ENCODE measurements at regions of chr12 and their contacts with region 1.

Region 1: DNA sequence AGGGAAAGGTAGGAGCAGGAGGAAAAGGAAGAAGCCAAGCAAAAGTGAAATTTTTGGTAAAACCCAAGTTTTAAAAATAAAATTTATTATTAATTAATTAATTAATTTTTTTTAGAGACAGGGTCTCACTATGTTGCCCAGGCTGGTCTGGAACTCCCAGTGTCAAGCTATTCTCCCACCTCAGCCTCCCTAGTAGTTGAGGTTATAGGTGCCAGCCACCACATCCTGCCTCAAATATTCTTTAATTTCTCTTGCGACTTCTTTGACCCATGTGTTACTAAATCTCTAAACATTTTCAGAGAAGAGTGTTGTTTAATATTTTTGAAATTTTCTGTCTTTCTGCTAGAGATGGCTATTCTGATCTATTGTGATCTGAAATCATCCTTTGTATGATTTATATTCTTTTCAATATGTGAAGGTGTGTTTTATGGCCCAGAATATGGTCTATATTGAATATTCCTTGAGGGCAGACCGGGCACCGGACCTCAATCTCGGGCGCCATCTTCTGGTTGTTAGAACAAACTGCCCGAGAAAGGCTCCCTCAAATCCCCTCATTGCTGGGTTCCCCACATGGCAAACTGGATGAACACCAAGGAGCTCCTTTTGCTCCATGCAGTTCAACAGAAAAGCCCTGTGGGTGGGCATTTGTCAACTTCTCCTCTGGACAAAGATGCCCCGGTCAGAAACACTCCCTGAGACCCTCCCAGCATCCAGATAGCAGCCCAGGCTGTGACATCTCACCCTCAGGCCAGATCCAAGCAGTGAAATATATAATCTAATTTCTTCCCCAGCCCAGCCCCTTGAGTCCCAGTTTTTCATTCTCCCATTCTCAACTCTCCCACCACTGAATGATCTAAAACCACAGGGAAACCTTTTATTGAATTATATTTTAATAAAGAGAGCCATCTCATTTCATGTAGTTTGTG is 110.5 kb downstream of the ASCL4 start:
- DNase-seq: no peak

Region 2: DNA sequence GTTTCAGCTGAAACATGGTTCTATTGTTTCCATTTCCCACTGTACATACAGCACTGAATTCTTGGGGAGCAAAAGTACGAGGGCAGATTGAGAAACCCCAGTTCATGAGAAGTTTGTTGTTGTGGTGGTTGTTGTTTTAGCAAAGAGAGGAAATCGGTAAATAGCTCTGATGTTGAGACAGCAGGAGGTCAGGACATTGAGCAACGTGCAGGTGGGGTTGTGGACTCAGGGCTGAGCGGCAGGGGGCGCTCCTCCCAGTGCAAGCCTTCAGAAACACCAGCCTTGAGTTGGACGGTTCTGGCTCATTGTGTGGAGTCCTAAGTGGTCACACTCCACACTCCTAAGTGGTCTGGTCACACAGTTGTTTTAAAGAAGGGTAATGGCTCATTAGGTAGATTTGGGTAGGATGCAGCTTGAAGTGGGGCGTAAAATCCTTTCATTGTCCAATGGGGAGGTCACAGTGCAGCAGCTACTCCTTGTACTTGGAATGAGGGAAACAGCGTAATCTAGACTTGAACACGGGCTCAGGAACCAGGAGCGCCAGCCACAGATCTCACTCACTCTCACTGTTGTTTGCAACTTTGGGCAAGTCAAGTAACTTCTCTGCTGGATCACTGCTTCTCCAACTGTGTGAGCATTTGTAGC is 213.9 kb before region 1 on chr12:
- intact Hi-C with region 1: loop called (anchors 10 kb)
- DNase-seq: no peak

Region 3: GRCh38 chr12:107779077-107779831 is 105.8 kb before region 1 on chr12:
- intact Hi-C with region 1: loop called in 1 of 2 experiments (anchors 5 kb)
- DNase-seq: no peak

Region 4: DNA sequence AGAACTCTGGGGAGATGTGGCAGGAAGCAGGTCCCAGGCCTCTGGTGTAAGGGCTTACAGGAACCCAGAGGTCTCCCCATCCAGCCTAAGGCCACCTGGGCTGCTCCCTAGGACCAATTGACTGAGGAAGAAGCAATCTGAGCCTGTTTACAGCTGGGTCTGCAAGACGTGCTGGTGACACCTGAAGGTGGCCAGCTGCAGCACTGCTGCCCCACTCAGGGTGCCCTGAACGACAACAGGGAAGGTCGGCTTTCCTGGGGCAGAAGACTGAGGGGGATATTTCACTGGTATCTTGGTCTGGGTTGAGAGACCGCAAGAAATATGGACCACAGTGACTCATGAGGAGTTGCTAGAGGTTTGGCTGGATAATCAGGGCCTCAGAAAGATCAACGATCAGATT is 70.1 kb before region 1 on chr12:
- intact Hi-C with region 1: no loop called
- DNase-seq: no peak

Region 5: DNA sequence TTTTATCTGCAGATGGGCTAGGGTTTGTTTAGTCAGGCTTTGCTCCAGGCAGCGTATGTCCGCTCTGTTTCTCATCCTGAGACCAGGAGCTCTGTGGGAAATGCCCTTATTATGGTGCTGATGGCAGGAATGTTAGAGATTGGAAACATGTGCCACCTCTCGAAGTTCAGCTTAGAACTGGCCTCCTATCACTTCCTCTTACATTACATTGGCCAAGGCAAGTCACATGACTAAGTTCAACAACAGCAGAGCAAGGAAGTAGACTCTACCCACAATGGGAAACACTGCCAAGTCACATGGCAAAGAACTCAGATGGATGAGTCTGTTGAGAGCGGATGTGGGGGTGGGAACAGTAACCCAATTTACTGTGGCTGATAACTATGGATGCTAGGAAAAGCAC is 82.1 kb after region 1 on chr12:
- intact Hi-C with region 1: no loop called
- DNase-seq: no peak

Region 6: DNA sequence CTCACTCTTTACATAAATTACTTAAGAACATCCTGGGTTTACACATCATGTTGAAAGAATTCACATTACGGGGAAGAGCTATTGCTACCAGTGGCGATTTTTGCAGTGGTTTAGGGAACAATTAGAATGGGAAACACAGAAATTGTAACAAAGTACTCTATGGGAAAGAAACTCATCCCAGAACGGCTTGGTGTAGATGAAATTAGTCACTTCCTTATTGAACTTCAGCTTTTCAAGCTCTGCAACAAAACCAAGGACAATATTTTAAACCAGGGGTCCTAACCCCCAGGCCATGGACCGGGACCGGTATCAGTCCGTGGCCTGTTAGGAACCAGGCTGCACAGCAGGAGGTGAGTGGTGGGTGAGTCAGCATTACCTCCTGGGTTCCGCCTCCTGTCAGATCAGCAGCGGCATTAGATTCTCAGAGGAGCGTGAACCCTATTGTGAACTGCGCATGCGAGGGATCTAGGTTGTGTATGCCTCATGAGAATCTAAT is 597.7 kb after region 1 on chr12:
- intact Hi-C with region 1: no loop called
- DNase-seq: no peak

Region 7: GRCh38 chr12:108784270-108784669 is 899.2 kb after region 1 on chr12:
- intact Hi-C with region 1: loop called in 1 of 2 experiments (anchors 5 kb)
- DNase-seq: no peak

Measured in posterior vena cava (tissue), 2 donors.